Activated CD4-positive, alpha-beta T cell treated with anti-CD3 and anti-CD28 coated beads, Interleukin-2, amount 10 ng/mL, durations not matched to agents 24 days and 14 days (primary cell): ENCODE measurements at regions of chr4 and their contacts with region 1.

Region 1: GRCh38 chr4:145829629-145830395 is 108.8 kb downstream of the ZNF827 start:
- DNase-seq: peak; percentile 70
- H3K4me3 Mint-ChIP-seq: peak overlapping the region; percentile 76
- H3K27ac Mint-ChIP-seq: peak overlapping the region; percentile 87
- H3K4me1 Mint-ChIP-seq: peaks cover 43% of the 10 kb centered on the region
- H3K27me3 Mint-ChIP-seq: no peaks in the 10 kb centered on the region

Region 2: DNA sequence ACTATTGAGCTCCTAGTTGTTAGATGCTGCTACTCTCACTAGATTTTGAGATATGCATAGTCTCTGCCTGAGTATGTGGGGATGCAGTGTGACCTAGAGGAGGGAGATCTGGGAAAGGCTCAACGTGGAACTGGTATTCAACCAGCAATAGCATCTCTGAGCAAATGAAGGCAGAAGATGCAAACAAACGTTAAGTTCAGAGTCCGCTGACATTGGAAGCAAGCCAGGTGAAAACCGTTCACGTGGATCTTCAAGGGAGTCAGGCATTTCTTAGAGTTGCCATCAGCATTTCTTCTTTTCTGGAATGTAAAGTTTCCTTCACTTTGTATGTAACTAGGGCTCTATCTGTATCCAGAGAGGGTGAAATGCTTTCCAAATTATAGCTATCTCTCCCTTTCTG is 90.0 kb before region 1 on chr4:
- intact Hi-C with region 1: no loop called
- DNase-seq: no peak
- H3K4me3 Mint-ChIP-seq: no peak overlapping the region
- H3K27ac Mint-ChIP-seq: no peak overlapping the region
- H3K4me1 Mint-ChIP-seq: peaks cover 2% of the 10 kb centered on the region
- H3K27me3 Mint-ChIP-seq: peaks cover 17% of the 10 kb centered on the region

Region 3: DNA sequence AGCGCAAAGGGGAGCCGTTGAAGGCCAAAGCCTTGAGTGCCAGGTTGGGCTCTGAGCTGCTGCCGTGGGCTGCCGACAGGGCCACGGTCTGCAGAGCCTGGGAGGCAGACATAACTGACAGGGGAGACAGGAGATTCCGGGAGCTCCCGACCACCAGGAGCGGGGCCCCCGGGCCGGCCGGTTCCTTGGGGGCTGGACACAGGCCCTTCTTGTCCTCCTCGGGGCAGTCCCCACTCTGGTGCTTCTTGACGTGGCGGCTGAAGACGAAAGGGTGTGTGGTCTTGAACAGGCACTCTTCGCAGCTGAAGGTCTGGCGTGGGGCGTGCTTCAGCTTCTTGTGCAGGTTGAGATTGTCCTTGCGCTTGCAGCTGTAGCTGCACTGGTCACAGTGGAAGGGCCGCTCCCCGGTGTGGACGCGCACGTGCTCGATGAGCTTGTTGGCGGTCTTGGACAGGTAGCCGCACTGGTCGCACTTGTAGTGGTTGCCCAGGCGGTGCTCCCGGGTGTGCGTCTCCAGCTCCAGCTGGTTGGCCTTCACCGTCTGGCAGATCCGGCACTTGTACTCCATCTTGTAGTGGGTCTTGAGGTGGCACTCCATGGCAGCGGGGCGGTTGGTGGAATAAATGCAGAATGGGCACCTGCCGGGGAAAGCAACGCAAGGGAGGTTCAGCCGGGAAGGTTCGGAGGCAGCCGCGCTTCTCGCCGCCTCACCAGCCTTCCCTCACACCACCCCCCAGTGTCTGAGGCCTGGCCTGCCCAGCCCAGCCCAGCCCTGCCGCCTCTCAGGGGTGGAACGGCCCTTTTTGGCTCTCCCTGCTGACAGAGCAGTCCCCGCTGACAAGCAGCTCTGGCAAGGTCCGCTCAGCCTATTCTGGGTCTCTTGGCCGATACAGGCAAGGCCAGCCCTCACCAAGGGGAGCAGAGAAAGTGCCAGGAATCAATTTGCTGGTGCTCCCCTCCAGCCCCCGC is 68.6 kb before region 1 on chr4:
- intact Hi-C with region 1: no loop called
- DNase-seq: no peak
- H3K4me3 Mint-ChIP-seq: no peak overlapping the region
- H3K27ac Mint-ChIP-seq: peak overlapping the region; percentile 75
- H3K4me1 Mint-ChIP-seq: peaks cover 25% of the 10 kb centered on the region
- H3K27me3 Mint-ChIP-seq: no peaks in the 10 kb centered on the region

Region 4: GRCh38 chr4:145785391-145786008 is 44.3 kb before region 1 on chr4:
- intact Hi-C with region 1: loop called (anchors 1 kb)
- DNase-seq: no peak
- H3K4me3 Mint-ChIP-seq: no peak overlapping the region
- H3K27ac Mint-ChIP-seq: peak overlapping the region; percentile 98
- H3K4me1 Mint-ChIP-seq: peaks cover 39% of the 10 kb centered on the region
- H3K27me3 Mint-ChIP-seq: no peaks in the 10 kb centered on the region

Region 5: DNA sequence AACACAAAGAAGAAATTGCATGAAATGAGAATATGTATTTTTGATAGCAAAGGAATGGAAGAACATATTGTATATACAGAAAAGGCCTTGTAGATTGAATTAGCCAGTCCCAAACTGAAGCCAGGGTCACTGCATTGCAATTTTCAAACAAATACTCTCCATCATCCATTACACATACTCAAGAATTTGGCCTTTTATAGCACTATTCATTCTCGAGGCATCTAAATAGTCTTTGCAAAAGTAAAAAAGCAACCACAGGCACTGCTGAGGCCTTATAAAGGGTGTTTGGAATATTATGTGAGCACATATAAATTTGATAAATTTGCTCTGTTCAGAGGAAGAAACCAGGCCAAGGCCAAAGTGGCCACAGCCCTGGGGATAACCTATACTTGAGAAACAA is 14.2 kb before region 1 on chr4:
- intact Hi-C with region 1: loop called (anchors 1 kb)
- DNase-seq: no peak
- H3K4me3 Mint-ChIP-seq: peak overlapping the region; percentile 61
- H3K27ac Mint-ChIP-seq: peak overlapping the region; percentile 93
- H3K4me1 Mint-ChIP-seq: peaks cover 38% of the 10 kb centered on the region
- H3K27me3 Mint-ChIP-seq: no peaks in the 10 kb centered on the region

Region 6: GRCh38 chr4:146132445-146132844 is 302.6 kb after region 1 on chr4:
- intact Hi-C with region 1: loop called (anchors 5 kb)
- DNase-seq: peak; percentile 73
- H3K4me3 Mint-ChIP-seq: peak overlapping the region; percentile 7
- H3K27ac Mint-ChIP-seq: peak overlapping the region; percentile 55
- H3K4me1 Mint-ChIP-seq: peaks cover 11% of the 10 kb centered on the region
- H3K27me3 Mint-ChIP-seq: peaks cover 6% of the 10 kb centered on the region

Region 7: DNA sequence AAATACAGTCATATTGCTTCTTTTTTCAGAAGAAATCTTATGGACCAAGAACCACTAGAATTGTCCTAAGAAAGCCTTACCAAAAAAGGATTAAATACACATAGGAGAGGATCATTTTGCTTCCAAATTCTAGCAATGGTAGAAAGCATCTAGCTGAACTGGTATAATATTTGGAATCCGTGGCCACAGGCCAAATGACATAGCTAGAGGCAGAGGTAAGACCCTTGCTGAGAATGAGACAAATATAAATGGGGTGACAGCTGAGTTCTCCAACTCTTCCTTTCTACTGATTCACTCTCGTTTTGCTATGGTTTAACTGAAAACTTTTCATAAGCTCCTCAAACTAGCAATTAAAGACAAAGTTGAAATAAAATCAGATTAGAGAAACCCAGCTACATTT is 965.9 kb after region 1 on chr4:
- intact Hi-C with region 1: no loop called
- DNase-seq: no peak
- H3K4me3 Mint-ChIP-seq: no peak overlapping the region
- H3K27ac Mint-ChIP-seq: no peak overlapping the region
- H3K4me1 Mint-ChIP-seq: no peaks in the 10 kb centered on the region
- H3K27me3 Mint-ChIP-seq: no peaks in the 10 kb centered on the region